Sigmoid colon (tissue), 7 donors: ENCODE measurements at regions of chr16 and their contacts with region 1.

Region 1: GRCh38 chr16:4734063-4734729 is at the starts of genes ANKS3 and DNAAF8:
- DNase-seq: peak; percentile 99
- H3K4me3 ChIP-seq: peak within 1 kb of the TSS; percentile 63 to 86 (median 66)
- H3K27ac ChIP-seq: peak within 1 kb of the TSS; percentile 85 to 91 (median 90)
- H3K4me1 ChIP-seq: peaks cover 0 to 20% (median 17%) of the 10 kb centered on the region in 4 donors
- H3K27me3 ChIP-seq: no peaks in the 10 kb centered on the region
- CTCF ChIP-seq: no peak
- EP300 ChIP-seq: peak in 1 of 4 donors; percentile 37
- POLR2A ChIP-seq: no peak
- total RNA-seq, gene ANKS3: 20.3 to 30.7 (median 23.8) TPM
- total RNA-seq, gene DNAAF8: 0.14 to 0.83 (median 0.43) TPM

Region 2: GRCh38 chr16:4693296-4693955 is 40.8 kb before region 1 on chr16 and contains the start of gene NUDT16L1:
- intact Hi-C with region 1: loop called (anchors 2 kb)
- DNase-seq: peak; percentile 98
- H3K4me3 ChIP-seq: peak within 1 kb of the TSS; percentile 74 to 93 (median 88)
- H3K27ac ChIP-seq: peak within 1 kb of the TSS; percentile 88 to 93 (median 91)
- H3K4me1 ChIP-seq: peaks cover 0 to 38% (median 32%) of the 10 kb centered on the region in 4 donors
- H3K27me3 ChIP-seq: no peaks in the 10 kb centered on the region
- CTCF ChIP-seq: no peak
- EP300 ChIP-seq: no peak
- POLR2A ChIP-seq: peak; percentile 27 to 30
- total RNA-seq, gene NUDT16L1: 16.6 to 21.8 (median 18.6) TPM

Region 3: DNA sequence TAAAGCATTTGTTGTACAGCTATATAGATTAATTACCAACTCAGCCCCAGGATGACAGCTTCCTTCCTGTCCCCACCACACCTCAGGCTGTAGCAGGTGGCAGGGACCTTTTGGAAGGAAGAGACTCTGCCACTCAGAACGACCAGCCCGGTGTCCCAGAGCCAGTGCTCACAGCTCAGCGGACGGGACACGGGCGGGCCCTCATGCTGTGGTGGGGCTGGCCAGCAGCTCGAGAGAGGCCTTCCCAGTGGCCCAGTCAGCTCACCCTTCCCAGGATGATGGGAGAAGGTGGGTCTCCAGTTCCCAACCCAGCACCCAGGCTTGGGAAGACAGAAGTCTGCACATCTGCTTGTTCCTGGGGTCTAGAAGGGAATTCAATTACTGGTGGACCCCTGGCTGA is 30.3 kb before region 1 on chr16:
- intact Hi-C with region 1: no loop called
- DNase-seq: no peak
- H3K4me3 ChIP-seq: no peak overlapping the region
- H3K27ac ChIP-seq: no peak overlapping the region
- H3K4me1 ChIP-seq: no peaks in the 10 kb centered on the region
- H3K27me3 ChIP-seq: no peaks in the 10 kb centered on the region
- CTCF ChIP-seq: no peak
- EP300 ChIP-seq: no peak
- POLR2A ChIP-seq: no peak

Region 4: GRCh38 chr16:4766874-4767628 is 32.9 kb after region 1 on chr16 and contains the start of gene ZNF500:
- intact Hi-C with region 1: loop called (anchors 2 kb)
- DNase-seq: peak; percentile 98
- H3K4me3 ChIP-seq: peak within 1 kb of the TSS; percentile 80 to 96 (median 88)
- H3K27ac ChIP-seq: peak within 1 kb of the TSS; percentile 91 to 92 (median 92)
- H3K4me1 ChIP-seq: peaks cover 0 to 38% (median 35%) of the 10 kb centered on the region in 4 donors
- H3K27me3 ChIP-seq: no peaks in the 10 kb centered on the region
- CTCF ChIP-seq: no peak
- EP300 ChIP-seq: no peak
- POLR2A ChIP-seq: peak; percentile 37 to 38
- total RNA-seq, gene ZNF500: 10.2 to 14.4 (median 12.8) TPM

Region 5: DNA sequence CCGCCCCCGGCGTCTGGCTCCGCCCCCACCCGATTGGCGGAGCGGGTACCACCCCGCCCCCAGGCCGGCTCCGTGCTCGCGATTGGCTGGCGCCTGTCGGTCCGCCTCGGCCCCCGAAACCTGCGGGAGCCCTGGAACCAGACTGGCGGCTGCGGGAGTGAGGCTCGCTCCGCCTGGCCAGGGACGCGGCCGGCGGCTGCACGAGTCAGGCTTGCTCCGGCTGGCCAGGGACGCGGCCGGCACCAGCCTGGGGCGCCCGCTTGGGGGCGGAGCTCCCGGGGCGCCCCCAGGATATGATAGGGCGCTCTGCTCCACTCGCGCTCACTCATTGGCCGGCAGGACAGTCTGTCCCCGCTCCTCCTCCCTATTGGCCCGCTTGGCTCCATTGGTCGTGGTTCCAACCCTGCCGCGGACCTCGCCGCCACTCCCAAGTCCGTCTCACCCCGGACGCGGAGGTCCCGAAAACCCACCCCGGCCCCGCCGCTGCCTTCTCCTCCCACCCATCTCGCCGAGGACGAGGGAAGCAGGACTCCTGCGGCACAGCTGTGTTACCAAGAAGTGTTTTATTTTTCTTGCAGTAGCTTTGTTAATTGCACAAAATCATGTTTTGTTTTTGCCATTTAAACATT is 68.6 kb after region 1 on chr16:
- intact Hi-C with region 1: loop called (anchors 2 kb)
- DNase-seq: peak; percentile 96
- H3K4me3 ChIP-seq: peak overlapping the region; percentile 55 to 86 (median 74)
- H3K27ac ChIP-seq: peak overlapping the region; percentile 86 to 92 (median 88)
- H3K4me1 ChIP-seq: peaks cover 0 to 41% (median 35%) of the 10 kb centered on the region in 4 donors
- H3K27me3 ChIP-seq: no peaks in the 10 kb centered on the region
- CTCF ChIP-seq: no peak
- EP300 ChIP-seq: no peak
- POLR2A ChIP-seq: no peak

Region 6: DNA sequence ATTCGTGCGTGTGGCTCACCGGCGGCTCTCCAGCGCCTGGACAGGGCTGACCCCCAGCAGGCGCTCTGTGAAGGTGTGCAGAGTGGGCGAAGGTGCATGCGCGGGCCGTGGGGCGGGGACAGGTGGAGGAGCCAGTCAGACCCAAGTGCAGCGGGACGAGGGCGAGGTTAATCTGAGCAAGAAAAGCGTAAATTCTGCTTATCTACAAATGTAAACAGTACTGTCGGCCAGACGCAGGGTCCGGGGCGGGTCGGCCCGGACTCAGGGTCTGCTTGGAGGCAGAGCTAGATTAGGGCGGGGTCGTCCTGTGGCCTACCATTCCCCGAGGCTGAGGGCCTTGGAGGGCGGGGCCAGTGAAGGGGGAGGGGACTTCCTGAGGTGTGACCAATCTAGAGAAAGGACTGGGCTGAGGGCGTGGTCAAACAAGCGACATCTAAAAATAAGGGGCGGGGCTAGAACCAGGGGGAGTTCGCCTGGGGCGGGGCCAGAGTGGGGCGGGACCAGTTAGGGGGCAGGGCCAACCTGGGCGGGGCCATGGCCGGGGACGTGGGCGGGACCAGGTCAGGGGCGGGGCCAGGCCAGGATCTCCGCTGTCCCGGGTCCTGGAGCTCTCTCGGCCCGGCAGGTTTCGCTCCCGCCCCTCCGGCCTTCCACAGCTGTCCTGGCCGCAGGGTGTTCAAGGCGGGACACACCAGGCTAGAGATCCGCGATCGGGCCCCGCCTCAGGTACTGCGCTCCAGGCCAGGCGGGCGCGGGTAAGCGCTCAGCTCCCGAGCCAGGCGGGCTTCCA is 223.7 kb after region 1 on chr16 and contains the start of gene SEC14L5:
- intact Hi-C with region 1: loop called (anchors 10 kb)
- DNase-seq: peak; percentile 98
- H3K4me3 ChIP-seq: peak within 1 kb of the TSS; percentile 28 to 58 (median 50)
- H3K27ac ChIP-seq: peak within 1 kb of the TSS; percentile 70 to 77 (median 74)
- H3K4me1 ChIP-seq: peaks cover 0 to 27% (median 18%) of the 10 kb centered on the region in 4 donors
- H3K27me3 ChIP-seq: no peaks in the 10 kb centered on the region
- CTCF ChIP-seq: no peak
- EP300 ChIP-seq: no peak
- POLR2A ChIP-seq: peak in 1 of 2 donors; percentile 60
- total RNA-seq, gene SEC14L5: 0.28 to 2.5 (median 0.65) TPM

Region 7: DNA sequence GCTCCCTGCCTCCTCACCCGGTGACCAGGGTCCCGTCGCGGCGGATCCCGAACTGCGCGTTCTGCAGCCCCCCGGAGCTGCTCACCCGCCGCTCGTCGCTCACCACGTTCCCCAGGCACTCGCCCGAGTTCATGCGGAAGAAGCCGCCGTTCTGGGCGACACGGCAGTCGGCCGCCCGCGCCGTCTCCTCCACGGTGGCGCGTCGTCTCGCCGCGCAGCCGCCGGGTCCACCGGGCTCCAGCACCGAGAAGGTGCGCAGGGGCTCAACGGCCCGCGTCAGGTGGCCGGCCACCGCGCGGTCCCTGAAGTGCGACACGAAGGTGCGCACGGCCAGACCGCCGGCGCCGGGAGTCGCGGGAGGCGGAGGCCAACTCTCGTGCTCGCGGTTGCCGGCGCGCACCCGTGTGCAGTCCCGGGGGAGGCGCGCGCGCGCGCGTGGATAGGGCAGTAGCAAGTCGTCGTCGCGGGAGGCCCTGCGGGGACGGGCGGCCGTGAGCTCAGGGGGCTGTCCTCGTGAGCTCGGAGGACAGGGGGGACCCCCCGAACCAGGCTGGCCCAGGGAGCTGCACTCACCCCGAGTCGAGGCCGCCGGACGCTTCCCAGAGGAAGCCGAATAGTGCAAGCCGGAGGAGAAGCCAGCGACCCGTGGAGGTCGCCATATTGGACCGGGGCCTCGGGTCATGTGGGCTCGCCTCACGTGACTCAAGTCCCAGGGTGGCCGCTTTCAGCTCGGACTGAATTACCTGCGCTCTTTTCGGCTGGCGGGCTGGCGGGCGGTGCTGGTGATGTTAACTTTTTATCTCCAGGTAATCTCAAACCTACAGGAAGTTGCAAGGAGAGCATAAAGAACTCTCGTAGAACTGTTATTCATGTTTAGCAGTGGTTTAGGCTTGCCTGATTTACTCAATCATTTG is 299.3 kb after region 1 on chr16 and contains the start of gene NAGPA:
- intact Hi-C with region 1: no loop called
- DNase-seq: peak; percentile 95
- H3K4me3 ChIP-seq: peak within 1 kb of the TSS; percentile 79 to 95 (median 81)
- H3K27ac ChIP-seq: peak within 1 kb of the TSS; percentile 64 to 75 (median 64)
- H3K4me1 ChIP-seq: peaks cover 0 to 21% (median 16%) of the 10 kb centered on the region in 4 donors
- H3K27me3 ChIP-seq: no peaks in the 10 kb centered on the region
- CTCF ChIP-seq: no peak
- EP300 ChIP-seq: no peak
- POLR2A ChIP-seq: peak in 1 of 2 donors; percentile 23
- total RNA-seq, gene NAGPA: 11.7 to 30.7 (median 17.1) TPM